IMR-90 (cell line): ENCODE measurements at regions of chr20 and their contacts with region 1.

Region 1: GRCh38 chr20:39112178-39112743 is 150.1 kb downstream of the DHX35 start:
- DNase-seq: peak; percentile 28
- ATAC-seq: peak; percentile 96
- H3K4me3 ChIP-seq: no peak overlapping the region
- H3K27ac ChIP-seq: no peak overlapping the region
- H3K4me1 ChIP-seq: no peaks in the 10 kb centered on the region
- H3K27me3 ChIP-seq: peaks cover 8% of the 10 kb centered on the region
- CTCF ChIP-seq: peak; percentile 52
- POLR2A ChIP-seq: no peak
- RAD21 ChIP-seq: peak; percentile 62

Region 2: GRCh38 chr20:40610730-40611129 is 1498.5 kb after region 1 on chr20:
- CTCF ChIA-PET with region 1: no interaction called
- POLR2A ChIA-PET with region 1: no interaction called
- dilution Hi-C with region 1: no loop called
- in situ Hi-C with region 1: no loop called
- intact Hi-C with region 1: loop called (anchors 5 kb)
- DNase-seq: no peak
- ATAC-seq: no peak
- H3K4me3 ChIP-seq: no peak overlapping the region
- H3K27ac ChIP-seq: no peak overlapping the region
- H3K4me1 ChIP-seq: no peaks in the 10 kb centered on the region
- H3K27me3 ChIP-seq: no peaks in the 10 kb centered on the region
- CTCF ChIP-seq: no peak
- POLR2A ChIP-seq: no peak
- RAD21 ChIP-seq: no peak